H1 (cell line): ENCODE measurements at regions of chr10 and their contacts with region 1.

Region 1: GRCh38 chr10:109762555-109762954 is 160.8 kb downstream of the XPNPEP1 start:
- DNase-seq: no peak
- H3K4me3 ChIP-seq: no peak overlapping the region
- H3K27ac ChIP-seq: no peak overlapping the region
- H3K4me1 ChIP-seq: no peaks in the 10 kb centered on the region
- H3K27me3 ChIP-seq: no peaks in the 10 kb centered on the region
- CTCF ChIP-seq: no peak
- EP300 ChIP-seq: no peak
- POLR2A ChIP-seq: no peak
- RAD21 ChIP-seq: no peak

Region 2: GRCh38 chr10:109732254-109732965 is 30.1 kb before region 1 on chr10:
- CTCF ChIA-PET with region 1: no interaction called
- POLR2A ChIA-PET with region 1: no interaction called
- DNase-seq: no peak
- H3K4me3 ChIP-seq: no peak overlapping the region
- H3K27ac ChIP-seq: no peak overlapping the region
- H3K4me1 ChIP-seq: no peaks in the 10 kb centered on the region
- H3K27me3 ChIP-seq: no peaks in the 10 kb centered on the region
- CTCF ChIP-seq: no peak
- EP300 ChIP-seq: no peak
- POLR2A ChIP-seq: no peak
- RAD21 ChIP-seq: no peak

Region 3: GRCh38 chr10:109743574-109743973 is 19.0 kb before region 1 on chr10:
- CTCF ChIA-PET with region 1: interaction called, 11 read pairs
- POLR2A ChIA-PET with region 1: no interaction called
- DNase-seq: no peak
- H3K4me3 ChIP-seq: no peak overlapping the region
- H3K27ac ChIP-seq: no peak overlapping the region
- H3K4me1 ChIP-seq: no peaks in the 10 kb centered on the region
- H3K27me3 ChIP-seq: peaks cover 0 to 1% (median 0%) of the 10 kb centered on the region in 4 experiments; a peak in 1 of 7 replicates
- CTCF ChIP-seq: no peak
- EP300 ChIP-seq: no peak
- POLR2A ChIP-seq: no peak
- RAD21 ChIP-seq: no peak

Region 4: GRCh38 chr10:109790647-109791046 is 28.1 kb after region 1 on chr10:
- CTCF ChIA-PET with region 1: no interaction called
- POLR2A ChIA-PET with region 1: no interaction called
- DNase-seq: no peak
- H3K4me3 ChIP-seq: no peak overlapping the region
- H3K27ac ChIP-seq: no peak overlapping the region
- H3K4me1 ChIP-seq: no peaks in the 10 kb centered on the region
- H3K27me3 ChIP-seq: no peaks in the 10 kb centered on the region; a peak in 1 of 7 replicates
- CTCF ChIP-seq: no peak
- EP300 ChIP-seq: no peak
- POLR2A ChIP-seq: no peak
- RAD21 ChIP-seq: no peak